H1 (cell line): ENCODE measurements at regions of chr17 and their contacts with region 1.

Region 1: DNA sequence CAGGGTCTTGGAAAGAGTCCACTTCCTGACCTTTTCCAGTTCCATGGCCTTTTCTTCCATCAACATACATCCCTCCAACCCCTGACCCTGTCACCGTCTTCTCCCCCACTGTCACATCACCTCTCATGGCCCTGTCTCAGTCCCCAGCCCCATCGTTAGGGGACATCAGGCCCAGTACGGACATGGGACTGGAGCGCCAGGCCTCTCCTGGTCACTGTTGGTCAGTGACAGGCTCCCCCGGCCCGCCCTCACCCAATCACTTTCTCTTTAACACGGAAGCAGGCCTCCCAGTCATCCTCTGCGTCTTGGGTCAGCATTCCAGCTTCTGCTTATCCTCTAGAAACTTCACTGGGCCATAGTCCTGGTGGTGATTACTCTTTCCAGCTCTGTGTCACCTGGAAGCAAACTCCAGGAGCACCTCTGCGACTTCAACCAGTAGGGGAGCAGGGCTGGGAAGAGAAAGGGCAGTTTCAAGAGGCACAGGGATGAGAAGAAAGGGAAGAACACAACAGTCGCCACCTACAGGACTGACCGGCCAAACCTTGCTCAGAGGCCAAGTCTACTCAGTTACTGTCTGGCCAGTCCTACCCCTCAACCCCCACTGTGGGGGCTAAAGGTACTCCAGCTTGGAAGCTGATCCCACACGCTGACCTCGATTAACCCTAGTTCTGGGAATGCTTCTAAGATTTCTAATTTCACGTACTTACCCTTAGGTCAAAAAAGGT is 15.9 kb upstream of the ICAM2 start:
- DNase-seq: peak in 1 of 2 experiments; percentile 65
- H3K4me3 ChIP-seq: no peak overlapping the region
- H3K27ac ChIP-seq: no peak overlapping the region
- H3K4me1 ChIP-seq: no peaks in the 10 kb centered on the region
- H3K27me3 ChIP-seq: no peaks in the 10 kb centered on the region
- CTCF ChIP-seq: peak; percentile 68 to 84 (median 82)
- EP300 ChIP-seq: no peak
- POLR2A ChIP-seq: no peak
- RAD21 ChIP-seq: peak; percentile 42 to 56; a peak in 3 of 4 replicates

Region 2: GRCh38 chr17:64051153-64051552 is 14.8 kb after region 1 on chr17:
- CTCF ChIA-PET with region 1: interaction called, 105 read pairs
- POLR2A ChIA-PET with region 1: no interaction called
- DNase-seq: no peak
- H3K4me3 ChIP-seq: no peak overlapping the region
- H3K27ac ChIP-seq: no peak overlapping the region
- H3K4me1 ChIP-seq: peaks cover 0 to 5% (median 4%) of the 10 kb centered on the region in 4 experiments; a peak in 6 of 7 replicates
- H3K27me3 ChIP-seq: no peaks in the 10 kb centered on the region
- CTCF ChIP-seq: no peak
- EP300 ChIP-seq: no peak
- POLR2A ChIP-seq: no peak
- RAD21 ChIP-seq: no peak

Region 3: GRCh38 chr17:64081802-64082799 is 45.7 kb after region 1 on chr17:
- CTCF ChIA-PET with region 1: no interaction called
- POLR2A ChIA-PET with region 1: no interaction called
- DNase-seq: no peak
- H3K4me3 ChIP-seq: no peak overlapping the region
- H3K27ac ChIP-seq: no peak overlapping the region
- H3K4me1 ChIP-seq: peaks cover 0 to 7% (median 0%) of the 10 kb centered on the region in 4 experiments; a peak in 2 of 7 replicates
- H3K27me3 ChIP-seq: no peaks in the 10 kb centered on the region
- CTCF ChIP-seq: no peak
- EP300 ChIP-seq: no peak
- POLR2A ChIP-seq: no peak
- RAD21 ChIP-seq: no peak